ENCODE measurements at regions of chr1 and their contacts with region 1.

Region 1: GRCh38 chr1:90964444-90965035 is 57.3 kb downstream of the ZNF644 start:
- DNase-seq: no peak
- ATAC-seq: peak in 2 of 4 donors; percentile 55 to 58
- H3K4me3 ChIP-seq: no peak overlapping the region
- H3K27ac ChIP-seq: no peak overlapping the region
- H3K4me1 ChIP-seq: peaks cover 43% of the 10 kb centered on the region
- H3K27me3 ChIP-seq: no peaks in the 10 kb centered on the region
- CTCF ChIP-seq: peak; percentile 51

Region 2: DNA sequence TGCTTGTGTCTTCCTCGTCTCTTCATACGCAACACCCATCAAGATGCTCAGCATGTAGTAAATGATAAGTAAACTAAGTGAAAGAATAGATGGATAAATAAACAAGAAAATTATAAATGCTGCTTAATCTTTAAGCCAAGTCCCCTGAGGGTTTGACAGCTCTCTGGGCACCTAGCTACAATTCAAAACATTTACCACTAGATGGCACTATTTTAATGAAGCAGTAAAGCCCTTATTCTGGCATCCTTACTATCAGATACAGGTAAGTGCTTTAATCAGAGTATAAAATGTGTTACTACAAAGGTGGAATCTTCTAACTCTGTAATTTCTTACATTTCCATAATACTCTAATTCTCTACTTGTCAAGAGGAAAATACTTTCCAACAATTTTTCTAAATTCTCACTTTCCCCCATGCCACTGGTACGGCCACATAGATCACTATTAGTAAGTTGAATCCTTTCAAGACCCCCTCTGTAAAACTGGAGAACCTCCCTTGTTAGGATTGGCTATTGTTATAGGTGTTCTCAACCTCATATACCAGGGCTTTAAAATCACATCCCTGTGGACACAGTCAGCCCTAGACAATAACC is 385.2 kb before region 1 on chr1:
- intact Hi-C with region 1: loop called (anchors 5 to 10 kb)
- DNase-seq: no peak
- ATAC-seq: peak in 2 of 4 donors; percentile 48 to 76
- H3K4me3 ChIP-seq: no peak overlapping the region
- H3K27ac ChIP-seq: no peak overlapping the region
- H3K4me1 ChIP-seq: no peaks in the 10 kb centered on the region
- H3K27me3 ChIP-seq: peaks cover 0 to 10% (median 0%) of the 10 kb centered on the region in 3 donors
- CTCF ChIP-seq: peak; percentile 63

Region 3: DNA sequence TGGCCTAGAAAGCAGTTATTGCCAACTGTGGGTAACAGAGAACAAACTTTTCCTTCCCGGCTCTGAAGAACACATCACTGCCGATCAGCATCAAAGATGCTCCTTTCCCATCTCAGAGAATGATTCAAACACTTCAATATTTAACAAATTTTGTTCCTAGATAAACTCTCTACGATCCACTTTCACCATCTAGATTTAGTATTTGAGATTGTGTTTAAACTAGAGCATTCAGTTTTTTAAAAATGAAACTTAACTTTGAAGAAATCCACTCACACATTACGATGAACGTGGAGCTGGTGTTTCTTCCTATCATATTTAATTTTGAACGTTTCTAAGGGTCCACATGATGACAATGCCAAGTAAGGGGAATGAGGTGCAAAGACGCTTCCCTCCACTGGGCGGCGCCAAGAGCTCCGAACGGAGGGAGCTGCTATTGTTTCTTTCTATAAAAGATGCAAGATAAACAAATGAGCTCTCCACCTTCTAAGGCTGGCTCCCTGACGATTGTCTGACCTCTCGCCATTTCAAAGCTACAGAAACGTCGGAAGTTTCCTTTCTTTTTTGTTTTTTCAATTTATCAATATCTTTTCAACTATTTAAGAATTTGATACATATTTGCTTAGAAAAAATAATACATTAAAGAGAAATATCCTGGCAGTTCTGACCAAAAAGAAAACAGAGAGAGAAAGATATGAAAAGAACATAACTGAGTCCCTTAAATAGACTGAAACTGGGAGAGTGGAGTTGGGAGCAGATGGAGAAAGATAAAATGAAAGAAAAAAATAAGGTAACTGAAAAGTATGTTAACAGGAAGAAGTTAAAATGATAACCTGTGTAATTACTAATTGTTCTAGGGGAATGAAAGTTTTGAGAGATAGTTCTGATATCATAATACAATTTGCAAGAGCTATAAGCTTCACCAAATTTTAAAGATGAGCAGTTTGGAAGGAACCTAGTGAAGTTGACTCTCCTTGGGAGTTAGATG is 243.0 kb before region 1 on chr1:
- intact Hi-C with region 1: loop called (anchors 5 to 10 kb)
- DNase-seq: no peak
- ATAC-seq: no peak
- H3K4me3 ChIP-seq: no peak overlapping the region
- H3K27ac ChIP-seq: no peak overlapping the region
- H3K4me1 ChIP-seq: peaks cover 29% of the 10 kb centered on the region
- H3K27me3 ChIP-seq: peaks cover 2 to 97% (median 81%) of the 10 kb centered on the region in 3 donors
- CTCF ChIP-seq: peak; percentile 68

Region 4: GRCh38 chr1:90784186-90784847 is 180.2 kb before region 1 on chr1:
- intact Hi-C with region 1: no loop called
- DNase-seq: no peak
- ATAC-seq: no peak
- H3K4me3 ChIP-seq: no peak overlapping the region
- H3K27ac ChIP-seq: no peak overlapping the region
- H3K4me1 ChIP-seq: no peaks in the 10 kb centered on the region
- H3K27me3 ChIP-seq: peaks cover 0 to 2% (median 0%) of the 10 kb centered on the region in 3 donors
- CTCF ChIP-seq: no peak

Region 5: DNA sequence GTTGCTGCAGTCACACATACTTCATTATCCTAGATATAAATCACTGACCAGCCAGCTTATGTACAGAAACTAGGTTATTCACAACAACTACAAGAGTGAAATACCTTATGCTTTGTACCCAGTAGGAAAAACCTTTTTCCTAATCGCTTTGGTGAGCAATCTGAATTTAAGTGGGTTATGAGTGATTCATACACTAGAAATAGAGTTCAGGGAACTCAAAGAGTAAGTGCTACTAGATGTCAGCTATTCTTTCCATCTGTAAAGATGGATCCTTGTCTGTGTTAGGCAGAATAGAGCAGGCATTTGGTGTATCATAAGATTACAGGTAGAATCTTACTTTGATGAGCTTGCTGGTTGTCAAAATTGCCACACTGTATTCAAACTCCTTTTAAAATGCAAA is 44.6 kb before region 1 on chr1:
- intact Hi-C with region 1: loop called in 1 of 2 experiments (anchors 5 kb)
- DNase-seq: no peak
- ATAC-seq: peak; percentile 79 to 95 (median 90)
- H3K4me3 ChIP-seq: no peak overlapping the region
- H3K27ac ChIP-seq: peak overlapping the region; percentile 51
- H3K4me1 ChIP-seq: peaks cover 52% of the 10 kb centered on the region
- H3K27me3 ChIP-seq: no peaks in the 10 kb centered on the region
- CTCF ChIP-seq: no peak

Region 6: GRCh38 chr1:90936061-90936460 is 28.5 kb before region 1 on chr1:
- intact Hi-C with region 1: loop called in 1 of 2 experiments (anchors 1 kb)
- DNase-seq: no peak
- ATAC-seq: no peak
- H3K4me3 ChIP-seq: no peak overlapping the region
- H3K27ac ChIP-seq: no peak overlapping the region
- H3K4me1 ChIP-seq: peaks cover 9% of the 10 kb centered on the region
- H3K27me3 ChIP-seq: no peaks in the 10 kb centered on the region
- CTCF ChIP-seq: no peak

Measured in psoas muscle (tissue), 8 donors.